Aorta (tissue), 5 donors: ENCODE measurements at regions of chr15 and their contacts with region 1.

Region 1: DNA sequence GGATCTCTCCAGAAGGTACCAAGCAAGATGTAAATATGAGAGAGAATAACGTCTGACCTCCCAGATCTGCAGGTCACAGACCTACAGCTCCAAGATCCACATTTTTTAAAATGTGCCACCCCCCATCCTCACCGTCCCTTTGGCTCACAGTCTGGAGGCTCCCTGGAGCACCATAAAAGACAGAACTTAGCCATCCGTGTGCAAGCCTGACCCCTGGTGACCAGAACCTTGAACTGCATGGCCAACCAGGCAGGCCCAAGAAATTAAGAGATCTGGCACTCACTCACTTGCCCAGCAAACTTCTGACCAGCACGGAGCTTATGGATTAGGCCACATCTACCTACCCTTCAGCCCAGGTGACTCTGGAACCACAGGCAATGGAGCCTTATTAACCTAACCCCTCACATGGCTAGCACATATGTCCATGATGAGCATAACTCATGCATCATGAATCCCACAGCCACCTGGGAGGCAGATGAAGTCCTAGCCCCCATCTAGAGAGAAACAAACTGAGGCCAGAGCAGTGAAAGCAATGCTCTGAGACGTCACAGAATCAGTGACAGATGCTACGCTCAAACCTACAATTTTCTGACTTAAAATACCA is 275.3 kb downstream of the UACA start:
- DNase-seq: peak; percentile 78 to 91
- ATAC-seq: peak; percentile 86
- H3K4me3 ChIP-seq: no peak overlapping the region
- H3K27ac ChIP-seq: no peak overlapping the region
- H3K4me1 ChIP-seq: no peaks in the 10 kb centered on the region
- H3K27me3 ChIP-seq: no peaks in the 10 kb centered on the region

Region 2: DNA sequence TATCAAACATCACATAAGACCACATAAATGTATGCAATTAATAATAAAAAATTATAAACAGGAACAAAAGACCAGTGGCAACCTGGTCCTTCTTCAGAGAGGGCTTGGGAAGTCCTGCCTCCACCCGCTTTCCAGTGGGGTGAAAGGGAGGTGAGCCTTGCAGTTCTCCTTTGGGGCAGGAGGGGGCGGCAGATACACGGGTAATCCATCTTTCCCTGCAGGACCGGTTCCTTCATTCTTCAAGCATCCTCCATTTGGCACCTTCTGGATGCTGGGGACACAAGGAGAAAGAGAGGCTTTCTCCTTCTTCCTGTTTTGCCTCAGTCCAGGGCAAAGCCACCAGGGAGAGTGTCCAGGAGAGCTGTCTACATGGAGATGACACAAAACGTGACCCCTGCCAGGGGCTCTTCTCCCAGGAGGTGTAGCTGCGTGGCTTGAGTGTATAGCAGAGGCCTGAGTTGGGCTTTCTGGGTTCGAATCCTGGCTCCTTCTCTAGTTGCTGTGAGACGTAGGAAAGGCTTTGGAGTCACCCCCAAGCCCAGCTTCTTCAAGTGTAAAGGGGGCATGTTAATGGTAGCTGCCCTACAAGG is 1012.2 kb before region 1 on chr15:
- intact Hi-C with region 1: loop called (anchors 5 to 10 kb)
- DNase-seq: peak; percentile 83 to 92
- ATAC-seq: peak; percentile 91
- H3K4me3 ChIP-seq: no peak overlapping the region
- H3K27ac ChIP-seq: no peak overlapping the region
- H3K4me1 ChIP-seq: no peaks in the 10 kb centered on the region
- H3K27me3 ChIP-seq: no peaks in the 10 kb centered on the region

Region 3: GRCh38 chr15:69576035-69576526 is 912.0 kb before region 1 on chr15:
- intact Hi-C with region 1: loop called in 1 of 2 experiments (anchors 5 kb)
- DNase-seq: peak; percentile 79 to 86
- ATAC-seq: peak; percentile 79
- H3K4me3 ChIP-seq: no peak overlapping the region
- H3K27ac ChIP-seq: no peak overlapping the region
- H3K4me1 ChIP-seq: no peaks in the 10 kb centered on the region
- H3K27me3 ChIP-seq: no peaks in the 10 kb centered on the region

Region 4: DNA sequence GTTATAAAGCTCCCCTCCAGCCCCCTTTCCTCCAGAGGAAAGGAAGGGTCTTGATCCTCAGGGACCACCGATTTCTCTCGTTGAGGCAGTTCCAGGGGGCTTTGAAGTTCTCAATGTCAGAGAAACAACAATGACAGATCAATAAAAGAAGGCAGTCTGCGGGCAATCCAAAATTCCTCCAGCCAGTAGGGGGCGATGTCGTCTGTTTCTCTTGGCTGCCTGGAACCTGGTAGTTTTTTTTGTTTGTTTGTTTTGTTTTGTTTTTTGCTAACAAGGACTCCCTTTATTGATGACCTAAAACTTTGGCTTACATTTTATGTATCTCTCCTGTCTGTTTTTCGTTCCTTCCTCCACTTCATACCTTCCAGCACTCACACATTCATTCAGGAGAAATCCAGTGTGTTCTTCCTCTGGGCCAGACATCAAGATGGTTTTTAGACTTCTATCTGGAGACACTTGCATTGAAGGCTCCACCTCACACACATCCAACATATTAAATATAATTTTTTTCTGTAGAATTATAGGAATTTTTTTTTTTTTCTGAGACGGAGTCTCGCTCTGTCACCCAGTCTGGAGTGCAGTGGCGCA is 758.8 kb before region 1 on chr15:
- intact Hi-C with region 1: loop called (anchors 5 to 10 kb)
- DNase-seq: no peak
- ATAC-seq: no peak
- H3K4me3 ChIP-seq: no peak overlapping the region
- H3K27ac ChIP-seq: no peak overlapping the region
- H3K4me1 ChIP-seq: no peaks in the 10 kb centered on the region
- H3K27me3 ChIP-seq: peaks cover 0 to 2% of the 10 kb centered on the region in 2 donors

Region 5: GRCh38 chr15:69734688-69735087 is 753.4 kb before region 1 on chr15:
- intact Hi-C with region 1: loop called (anchors 5 to 10 kb)
- DNase-seq: no peak
- ATAC-seq: peak; percentile 37
- H3K4me3 ChIP-seq: no peak overlapping the region
- H3K27ac ChIP-seq: no peak overlapping the region
- H3K4me1 ChIP-seq: no peaks in the 10 kb centered on the region
- H3K27me3 ChIP-seq: peaks cover 0 to 2% of the 10 kb centered on the region in 2 donors

Region 6: GRCh38 chr15:70556151-70556741 is 68.1 kb after region 1 on chr15:
- intact Hi-C with region 1: no loop called
- DNase-seq: no peak
- ATAC-seq: no peak
- H3K4me3 ChIP-seq: no peak overlapping the region
- H3K27ac ChIP-seq: no peak overlapping the region
- H3K4me1 ChIP-seq: no peaks in the 10 kb centered on the region
- H3K27me3 ChIP-seq: peaks cover 0 to 2% of the 10 kb centered on the region in 2 donors